PC-3 (cell line): ENCODE measurements at regions of chr5 and their contacts with region 1.

Region 1: DNA sequence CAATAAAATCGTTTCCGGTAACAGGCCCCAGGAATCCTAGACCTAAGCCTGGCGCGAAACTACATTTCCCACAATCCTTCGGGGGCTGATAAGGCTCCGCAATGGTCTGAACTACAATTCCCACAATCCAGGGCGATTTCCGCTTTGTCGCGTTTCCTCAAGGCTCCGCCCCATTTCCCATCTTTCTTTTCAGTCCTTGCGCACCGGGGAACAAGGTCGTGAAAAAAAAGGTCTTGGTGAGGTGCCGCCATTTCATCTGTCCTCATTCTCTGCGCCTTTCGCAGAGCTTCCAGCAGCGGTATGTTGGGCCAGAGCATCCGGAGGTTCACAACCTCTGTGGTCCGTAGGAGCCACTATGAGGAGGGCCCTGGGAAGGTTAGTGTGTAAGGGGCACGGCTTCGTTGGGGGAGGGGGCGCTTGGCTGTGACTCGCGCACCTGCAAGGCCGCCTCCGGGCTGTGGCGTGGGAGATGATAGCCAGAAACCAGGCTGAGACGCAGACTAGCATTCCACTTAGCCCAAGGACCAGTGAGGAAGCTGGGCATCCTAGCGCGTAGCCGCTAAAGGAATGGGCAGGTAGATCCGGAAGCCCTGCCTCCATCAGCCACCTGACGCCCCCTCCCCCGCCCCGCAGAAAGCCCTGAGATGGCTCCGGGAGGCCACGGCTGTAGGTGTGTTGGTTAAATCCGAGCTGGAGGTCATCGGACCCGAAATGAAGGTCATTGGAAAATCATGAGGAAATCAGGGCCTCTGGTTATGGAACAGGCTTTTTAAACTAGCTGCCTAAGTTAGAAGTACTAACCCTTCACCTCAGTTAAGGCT is at the start of gene COX7C:
- DNase-seq: peak; percentile 99
- ATAC-seq: peak; percentile 97
- H3K4me3 ChIP-seq: peak within 1 kb of the TSS; percentile 91
- H3K27ac ChIP-seq: peak within 1 kb of the TSS; percentile 59
- H3K4me1 ChIP-seq: peaks cover 10% of the 10 kb centered on the region
- H3K27me3 ChIP-seq: no peaks in the 10 kb centered on the region
- CTCF ChIP-seq: no peak
- total RNA-seq, gene COX7C: 568 and 659 TPM in 2 replicates

Region 2: GRCh38 chr5:86814907-86815306 is 196.9 kb after region 1 on chr5:
- CTCF ChIA-PET with region 1: no interaction called
- POLR2A ChIA-PET with region 1: no interaction called
- intact Hi-C with region 1: loop called (anchors 5 kb)
- DNase-seq: peak; percentile 47
- ATAC-seq: peak; percentile 94
- H3K4me3 ChIP-seq: no peak overlapping the region
- H3K27ac ChIP-seq: peak overlapping the region; percentile 42
- H3K4me1 ChIP-seq: peaks cover 14% of the 10 kb centered on the region
- H3K27me3 ChIP-seq: no peaks in the 10 kb centered on the region
- CTCF ChIP-seq: no peak